ENCODE measurements at regions of chr12 and their contacts with region 1.

Region 1: GRCh38 chr12:57250541-57251324 is at the start of gene STAC3:
- DNase-seq: no peak
- H3K4me3 ChIP-seq: no peak within 1 kb of the TSS
- H3K27ac ChIP-seq: no peak within 1 kb of the TSS
- H3K4me1 ChIP-seq: no peaks in the 10 kb centered on the region
- H3K27me3 ChIP-seq: no peaks in the 10 kb centered on the region
- CTCF ChIP-seq: no peak
- total RNA-seq, gene STAC3: 0.50 to 1.2 TPM

Region 2: GRCh38 chr12:57352166-57352565 is 101.4 kb after region 1 on chr12:
- CTCF ChIA-PET with region 1: no interaction called
- dilution Hi-C with region 1: loop called (anchors 5 kb)
- in situ Hi-C with region 1: no loop called
- intact Hi-C with region 1: no loop called
- DNase-seq: no peak
- H3K4me3 ChIP-seq: no peak overlapping the region
- H3K27ac ChIP-seq: no peak overlapping the region
- H3K4me1 ChIP-seq: no peaks in the 10 kb centered on the region
- H3K27me3 ChIP-seq: no peaks in the 10 kb centered on the region
- CTCF ChIP-seq: no peak

Measured in mammary epithelial cell (primary cell).